Body of pancreas (tissue), 4 donors: ENCODE measurements at regions of chr17 and their contacts with region 1.

Region 1: DNA sequence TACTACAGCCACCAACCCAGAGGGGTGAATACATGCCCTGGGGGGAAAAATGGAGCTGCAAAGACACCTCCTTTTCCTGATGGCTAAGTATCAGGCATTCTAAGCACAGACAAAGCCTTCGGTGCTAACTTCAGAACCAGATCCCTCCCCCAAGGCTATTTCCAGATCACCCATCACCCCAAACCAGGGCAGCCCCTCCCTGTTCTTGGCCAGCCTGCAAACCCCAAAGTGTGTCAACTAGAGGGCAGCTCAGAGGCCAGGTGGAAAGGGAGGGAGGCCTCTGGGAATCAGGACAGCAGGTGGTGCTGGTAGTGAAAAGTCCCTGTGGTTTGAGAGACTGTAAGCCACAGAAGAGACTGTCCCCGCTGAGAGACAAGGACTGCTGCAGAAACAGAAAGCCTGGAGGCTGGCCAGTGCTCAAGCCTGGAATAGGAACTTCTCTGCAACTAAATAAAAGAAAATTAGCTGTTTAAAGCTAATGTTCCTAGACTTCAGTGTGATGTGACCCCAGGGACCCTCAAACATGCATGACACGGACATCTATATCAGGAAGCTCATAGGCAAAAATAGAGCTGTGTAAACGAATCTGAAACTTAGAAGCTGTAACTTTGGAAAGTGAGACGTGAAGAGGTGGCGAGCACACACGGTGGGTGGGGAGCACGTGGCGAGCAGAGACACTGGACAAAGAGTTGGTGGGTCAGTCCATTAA is 9.1 kb downstream of the TUBG1 start:
- DNase-seq: peak; percentile 86 to 94 (median 92)
- ATAC-seq: peak; percentile 95
- H3K4me3 ChIP-seq: no peak overlapping the region
- H3K27ac ChIP-seq: peak overlapping the region; percentile 73 to 86 (median 78)
- H3K4me1 ChIP-seq: peaks cover 62% of the 10 kb centered on the region
- H3K27me3 ChIP-seq: no peaks in the 10 kb centered on the region
- CTCF ChIP-seq: peak in 5 of 7 experiments; percentile 37 to 70 (median 66)
- POLR2A ChIP-seq: peak in 2 of 3 donors; percentile 20 to 38

Region 2: GRCh38 chr17:42673885-42674754 is 55.5 kb after region 1 on chr17:
- intact Hi-C with region 1: loop called (anchors 5 kb)
- DNase-seq: peak in 3 of 4 donors; percentile 53 to 62 (median 54)
- ATAC-seq: no peak
- H3K4me3 ChIP-seq: peak overlapping the region; percentile 23 to 98
- H3K27ac ChIP-seq: peak overlapping the region; percentile 91 to 97 (median 93)
- H3K4me1 ChIP-seq: peaks cover 66% of the 10 kb centered on the region
- H3K27me3 ChIP-seq: no peaks in the 10 kb centered on the region
- CTCF ChIP-seq: peak in 4 of 7 experiments; percentile 14 to 29 (median 21)
- POLR2A ChIP-seq: no peak